SK-N-SH (cell line): ENCODE measurements at regions of chr2 and their contacts with region 1.

Region 1: GRCh38 chr2:88451811-88452565 is 505 bp downstream of the FOXI3 start:
- DNase-seq: peak; percentile 73
- H3K4me3 ChIP-seq: peak overlapping the region in 1 of 2 experiments; percentile 46; a peak in 2 of 4 replicates
- H3K27ac ChIP-seq: no peak overlapping the region
- H3K4me1 ChIP-seq: peaks cover 0 to 2% of the 10 kb centered on the region in 2 experiments; a peak in 1 of 4 replicates
- H3K27me3 ChIP-seq: peaks cover 41% of the 10 kb centered on the region; the same call in 1 of the 2 replicates
- CTCF ChIP-seq: no peak
- EP300 ChIP-seq: no peak
- RAD21 ChIP-seq: no peak

Region 2: DNA sequence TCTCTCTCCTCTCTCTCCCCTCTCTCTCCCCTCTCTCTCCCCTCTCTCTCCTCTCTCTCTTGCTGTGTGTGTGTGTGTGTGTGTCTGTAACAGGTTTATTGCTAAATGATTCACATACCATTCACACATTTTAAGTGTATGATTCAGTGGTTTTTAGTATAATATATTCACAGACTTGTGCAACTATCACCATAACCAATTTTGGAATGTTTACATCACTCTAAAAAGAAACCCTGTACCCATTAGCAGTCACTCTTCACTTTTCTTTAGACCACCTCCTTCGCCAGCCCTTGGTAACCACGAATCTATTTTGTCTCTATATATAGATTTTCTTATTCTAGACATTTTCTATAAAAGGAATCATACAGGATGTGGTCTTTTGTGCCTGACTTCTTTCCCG is 270.5 kb before region 1 on chr2:
- CTCF ChIA-PET with region 1: interaction called, 15 read pairs
- POLR2A ChIA-PET with region 1: no interaction called
- DNase-seq: no peak
- H3K4me3 ChIP-seq: no peak overlapping the region
- H3K27ac ChIP-seq: no peak overlapping the region
- H3K4me1 ChIP-seq: no peaks in the 10 kb centered on the region; a peak in 1 of 4 replicates
- H3K27me3 ChIP-seq: no peaks in the 10 kb centered on the region
- CTCF ChIP-seq: no peak
- EP300 ChIP-seq: no peak
- RAD21 ChIP-seq: no peak

Region 3: GRCh38 chr2:88187038-88187676 is 264.8 kb before region 1 on chr2:
- CTCF ChIA-PET with region 1: interaction called, 93 read pairs
- POLR2A ChIA-PET with region 1: no interaction called
- DNase-seq: peak; percentile 82
- H3K4me3 ChIP-seq: peak overlapping the region in 1 of 2 experiments; percentile 43; a peak in 1 of 4 replicates
- H3K27ac ChIP-seq: no peak overlapping the region
- H3K4me1 ChIP-seq: peaks cover 0 to 7% of the 10 kb centered on the region in 2 experiments; a peak in 1 of 4 replicates
- H3K27me3 ChIP-seq: no peaks in the 10 kb centered on the region
- CTCF ChIP-seq: peak; percentile 62
- EP300 ChIP-seq: no peak
- RAD21 ChIP-seq: peak; percentile 78

Region 4: DNA sequence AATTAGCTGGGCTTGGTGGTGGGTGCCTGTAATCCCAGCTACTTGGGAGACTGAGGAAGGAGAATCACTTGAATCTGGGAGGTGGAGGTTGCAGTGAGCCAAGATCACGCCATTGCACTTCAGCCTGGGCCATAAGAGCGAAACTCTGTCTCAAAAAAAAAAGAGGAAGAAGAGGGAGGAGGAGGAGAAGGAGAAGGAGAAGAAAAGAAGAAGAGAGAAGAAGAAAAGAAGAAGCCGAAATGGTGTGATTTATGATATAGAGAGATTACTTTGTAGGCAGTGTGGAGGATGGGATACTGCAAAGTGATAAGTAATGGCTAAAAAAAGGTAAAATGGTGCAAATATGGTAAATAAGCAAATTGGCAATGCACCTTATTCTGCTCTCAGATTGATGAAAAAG is 256.7 kb before region 1 on chr2:
- CTCF ChIA-PET with region 1: interaction called, 93 read pairs
- POLR2A ChIA-PET with region 1: no interaction called
- DNase-seq: no peak
- H3K4me3 ChIP-seq: no peak overlapping the region
- H3K27ac ChIP-seq: no peak overlapping the region
- H3K4me1 ChIP-seq: peaks cover 0 to 11% of the 10 kb centered on the region in 2 experiments; a peak in 2 of 4 replicates
- H3K27me3 ChIP-seq: peaks cover 7% of the 10 kb centered on the region
- CTCF ChIP-seq: no peak
- EP300 ChIP-seq: no peak
- RAD21 ChIP-seq: no peak

Region 5: DNA sequence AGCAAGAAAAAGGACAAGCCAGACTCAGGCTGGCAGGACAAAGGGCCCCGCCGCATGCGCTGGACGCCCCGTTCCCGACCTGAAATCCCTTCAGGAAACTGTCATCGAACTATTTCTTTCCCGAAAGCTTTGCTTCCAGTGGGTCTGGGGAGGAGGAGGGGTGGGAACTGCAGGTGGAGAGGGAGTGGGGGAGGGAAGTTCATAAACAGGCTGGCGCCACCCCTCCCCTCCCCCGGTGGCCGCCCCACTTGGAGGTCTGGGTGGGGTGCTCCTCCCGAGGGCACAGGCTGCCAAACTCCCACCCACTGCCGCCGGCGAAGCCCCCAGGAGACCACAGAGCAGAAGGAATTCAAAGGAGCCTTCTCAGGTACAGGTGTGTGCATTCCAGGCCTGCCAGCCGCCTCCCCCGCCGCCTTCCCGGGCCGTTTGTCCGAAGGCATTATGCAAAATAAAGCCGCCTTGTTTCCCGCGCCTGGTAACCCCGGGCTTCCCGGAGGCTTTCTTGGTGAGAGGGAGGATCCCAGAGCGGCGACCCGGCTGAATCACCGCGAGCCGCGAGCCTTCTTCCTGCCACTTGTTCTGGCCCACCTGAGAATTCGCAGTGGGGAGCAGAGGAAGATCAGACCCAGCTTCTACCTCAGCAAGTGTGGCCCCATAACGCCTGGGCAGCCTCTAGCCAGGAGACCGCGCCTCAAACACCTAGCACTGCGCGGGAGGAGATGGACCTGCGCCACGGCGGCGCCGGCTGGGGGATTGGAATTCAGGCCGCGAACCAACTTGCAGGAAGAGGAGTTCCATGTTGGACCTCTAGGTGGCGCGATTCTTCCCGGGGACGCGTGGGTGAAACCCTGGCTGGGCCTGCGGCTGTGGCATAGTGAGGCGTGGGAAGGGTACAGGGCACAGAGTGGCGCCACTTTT is 101.4 kb before region 1 on chr2:
- CTCF ChIA-PET with region 1: interaction called, 16 read pairs
- POLR2A ChIA-PET with region 1: no interaction called
- DNase-seq: peak; percentile 79
- H3K4me3 ChIP-seq: peak overlapping the region; percentile 10 to 57; a peak in 3 of 4 replicates
- H3K27ac ChIP-seq: no peak overlapping the region
- H3K4me1 ChIP-seq: no peaks in the 10 kb centered on the region; a peak in 1 of 4 replicates
- H3K27me3 ChIP-seq: no peaks in the 10 kb centered on the region
- CTCF ChIP-seq: peak; percentile 62
- EP300 ChIP-seq: no peak
- RAD21 ChIP-seq: peak; percentile 57

Region 6: GRCh38 chr2:88377641-88377991 is 74.4 kb before region 1 on chr2:
- CTCF ChIA-PET with region 1: interaction called, 12 read pairs
- POLR2A ChIA-PET with region 1: no interaction called
- DNase-seq: no peak
- H3K4me3 ChIP-seq: no peak overlapping the region
- H3K27ac ChIP-seq: peak overlapping the region in 1 of 2 experiments; percentile 77; a peak in 2 of 4 replicates
- H3K4me1 ChIP-seq: peaks cover 0 to 5% of the 10 kb centered on the region in 2 experiments; a peak in 2 of 4 replicates
- H3K27me3 ChIP-seq: no peaks in the 10 kb centered on the region
- CTCF ChIP-seq: no peak
- EP300 ChIP-seq: no peak
- RAD21 ChIP-seq: no peak

Region 7: DNA sequence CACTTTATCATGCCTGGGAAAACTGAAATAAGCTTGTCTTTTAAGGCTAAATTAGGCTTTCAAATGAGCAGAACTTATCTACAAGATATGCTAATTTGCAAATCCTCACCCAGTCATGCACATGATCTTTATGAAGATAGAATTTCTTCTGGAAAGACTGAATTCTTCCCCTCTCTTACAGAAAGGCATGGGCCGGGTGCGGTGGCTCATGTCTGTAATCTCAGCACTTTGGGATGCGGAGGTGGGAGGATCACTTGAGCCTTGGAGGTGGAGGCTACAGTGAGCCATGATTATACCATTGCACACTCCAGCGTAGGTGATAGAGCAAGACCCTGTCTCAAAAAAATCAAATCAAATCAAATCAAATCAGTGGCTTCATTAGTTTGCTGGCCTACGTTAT is 12.2 kb after region 1 on chr2:
- CTCF ChIA-PET with region 1: interaction called, 20 read pairs
- POLR2A ChIA-PET with region 1: no interaction called
- DNase-seq: no peak
- H3K4me3 ChIP-seq: no peak overlapping the region
- H3K27ac ChIP-seq: no peak overlapping the region
- H3K4me1 ChIP-seq: no peaks in the 10 kb centered on the region
- H3K27me3 ChIP-seq: no peaks in the 10 kb centered on the region
- CTCF ChIP-seq: no peak
- EP300 ChIP-seq: no peak
- RAD21 ChIP-seq: no peak